Posterior cingulate gyrus (tissue), 11 donors: ENCODE measurements at regions of chr3 and their contacts with region 1.

Region 1: DNA sequence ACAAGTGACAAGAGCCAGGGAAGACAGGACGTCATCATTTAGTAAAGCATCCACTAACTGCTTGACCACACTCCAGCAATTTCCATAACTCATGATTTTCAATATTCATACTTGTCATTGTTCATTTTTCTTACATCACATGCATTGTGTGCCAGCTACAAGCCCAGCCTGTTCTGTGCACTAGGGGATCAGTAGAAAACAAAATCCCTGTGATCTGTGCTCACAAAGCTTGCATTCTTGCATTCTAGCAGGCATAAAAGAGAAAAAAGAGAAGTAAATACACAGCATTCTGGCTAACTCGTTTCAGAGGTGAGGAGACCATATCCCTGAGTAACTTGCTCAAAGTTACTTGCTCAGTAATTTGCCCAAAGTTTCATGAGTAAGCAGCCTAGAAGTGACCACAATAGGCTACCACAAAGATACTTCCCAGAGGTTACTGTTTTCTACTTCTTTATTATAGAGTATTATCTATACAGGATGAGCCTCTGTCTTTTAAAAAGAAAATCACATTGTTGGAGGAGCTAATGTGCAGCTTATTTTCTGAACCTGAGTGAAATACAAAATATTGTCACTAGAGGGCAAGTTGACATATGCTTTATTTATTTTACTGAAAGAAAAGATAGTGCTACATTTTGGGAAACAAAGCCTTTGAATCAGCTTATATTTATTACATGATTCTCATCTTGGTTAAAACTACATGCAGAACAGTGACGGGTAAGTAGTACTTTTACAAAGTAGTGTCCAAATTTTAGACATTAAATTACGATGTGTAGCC is 701.4 kb upstream of the LMCD1 start:
- DNase-seq: no peak

Region 2: DNA sequence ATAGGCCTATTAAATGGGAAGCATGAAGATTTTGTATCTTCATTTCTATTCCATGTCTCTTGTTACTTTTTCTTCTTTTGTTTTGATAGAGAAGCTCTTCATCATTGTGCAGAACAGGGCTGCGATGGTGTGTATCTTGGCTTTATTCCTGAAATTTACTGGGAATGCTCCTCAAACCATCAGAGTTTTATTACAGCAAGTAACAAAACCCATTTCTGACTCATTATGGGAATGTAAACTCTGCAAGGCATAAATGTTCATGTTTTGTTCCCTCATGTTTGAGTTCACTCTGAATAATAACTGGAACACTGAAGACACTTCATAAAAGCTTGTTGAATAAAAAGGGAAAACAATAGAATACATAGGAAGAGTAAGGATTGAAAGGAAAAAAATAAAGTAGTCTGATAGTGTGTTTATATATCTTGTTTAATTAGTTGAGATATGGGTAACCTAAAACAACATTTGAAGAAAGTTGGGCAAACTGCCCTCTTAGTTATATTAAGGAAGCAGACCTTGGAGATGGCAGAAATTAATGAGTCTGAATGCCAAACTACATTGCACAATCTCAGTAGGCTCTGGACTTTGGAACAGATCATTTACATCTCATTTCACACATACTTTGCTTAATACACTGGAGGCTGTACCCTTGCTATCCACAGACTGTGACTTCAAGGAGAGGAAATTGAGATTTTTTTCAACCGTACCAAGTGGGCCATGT is 417.7 kb before region 1 on chr3:
- intact Hi-C with region 1: no loop called
- DNase-seq: no peak

Region 3: DNA sequence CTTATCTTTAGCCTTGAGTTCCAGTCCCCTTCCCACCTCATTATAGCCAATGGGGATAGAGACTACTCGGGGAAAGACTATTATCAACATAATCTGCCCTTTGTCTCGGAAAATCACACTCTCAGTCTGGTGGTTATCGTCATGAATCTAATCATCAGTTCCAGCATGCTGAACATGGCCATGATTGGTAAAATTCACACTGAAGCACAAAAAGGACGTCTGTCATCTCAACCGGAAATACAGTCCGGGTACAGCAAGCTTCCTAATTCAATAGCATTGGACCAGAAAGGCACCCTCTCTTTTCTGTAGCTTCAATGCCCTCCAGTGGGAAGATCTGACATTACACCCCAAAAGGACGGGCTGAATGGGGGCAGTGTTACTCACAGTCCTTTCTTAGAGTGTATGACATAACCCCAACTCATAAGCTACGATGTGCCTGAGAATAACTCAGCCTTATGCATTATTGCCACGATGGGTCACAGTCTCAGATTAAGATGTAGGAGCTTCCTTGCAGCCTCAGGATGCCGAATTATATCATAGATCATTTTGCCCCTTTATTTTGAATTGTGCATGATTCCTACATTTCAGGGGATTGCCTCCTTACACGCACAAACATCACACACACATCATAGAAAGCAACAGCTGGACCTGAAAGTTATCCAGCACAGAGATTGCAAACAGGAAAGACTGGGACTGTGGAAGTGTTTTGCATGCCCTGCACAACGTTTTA is 311.0 kb after region 1 on chr3:
- intact Hi-C with region 1: loop called (anchors 5 kb)
- DNase-seq: peak in 8 of 10 donors; percentile 15 to 93 (median 74)

Region 4: GRCh38 chr3:8301728-8302462 is 501.7 kb after region 1 on chr3:
- intact Hi-C with region 1: loop called (anchors 10 kb)
- DNase-seq: no peak